A673 (cell line): ENCODE measurements at regions of chr4 and their contacts with region 1.

Region 1: GRCh38 chr4:110637408-110638088 is 14.7 kb upstream of the PITX2 start:
- DNase-seq: peak; percentile 34
- H3K4me3 ChIP-seq: peak overlapping the region; percentile 57
- H3K27ac ChIP-seq: no peak overlapping the region
- H3K4me1 ChIP-seq: no peaks in the 10 kb centered on the region
- H3K27me3 ChIP-seq: peaks cover 14% of the 10 kb centered on the region
- CTCF ChIP-seq: peak; percentile 43; the same call in 1 of the 2 replicates

Region 2: DNA sequence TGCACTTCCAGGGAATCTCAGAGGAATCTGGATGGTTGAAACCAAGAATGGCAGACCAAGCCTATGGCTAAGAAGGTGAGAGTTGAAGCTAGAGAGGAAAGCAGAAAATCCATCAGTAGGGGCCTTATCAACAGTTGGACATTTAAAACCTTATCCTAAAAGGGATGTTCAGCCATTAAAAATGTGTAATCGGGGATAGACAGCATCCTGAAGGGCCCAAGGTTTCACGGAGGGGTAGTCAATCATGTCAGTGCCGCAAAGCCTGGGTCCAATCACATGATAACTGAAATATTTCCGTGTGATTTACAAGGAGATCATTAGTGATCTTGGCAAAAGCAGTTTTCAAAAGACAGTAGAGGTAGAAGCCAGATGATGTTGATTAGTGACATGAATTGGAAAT is 377.2 kb before region 1 on chr4:
- CTCF ChIA-PET with region 1: no interaction called
- POLR2A ChIA-PET with region 1: no interaction called
- intact Hi-C with region 1: no loop called
- DNase-seq: no peak
- H3K4me3 ChIP-seq: no peak overlapping the region
- H3K27ac ChIP-seq: no peak overlapping the region
- H3K4me1 ChIP-seq: no peaks in the 10 kb centered on the region
- H3K27me3 ChIP-seq: no peaks in the 10 kb centered on the region
- CTCF ChIP-seq: no peak

Region 3: GRCh38 chr4:110808351-110808878 is 170.9 kb after region 1 on chr4:
- CTCF ChIA-PET with region 1: no interaction called
- POLR2A ChIA-PET with region 1: no interaction called
- intact Hi-C with region 1: no loop called
- DNase-seq: peak; percentile 41
- H3K4me3 ChIP-seq: no peak overlapping the region
- H3K27ac ChIP-seq: no peak overlapping the region
- H3K4me1 ChIP-seq: no peaks in the 10 kb centered on the region
- H3K27me3 ChIP-seq: no peaks in the 10 kb centered on the region
- CTCF ChIP-seq: no peak

Region 4: DNA sequence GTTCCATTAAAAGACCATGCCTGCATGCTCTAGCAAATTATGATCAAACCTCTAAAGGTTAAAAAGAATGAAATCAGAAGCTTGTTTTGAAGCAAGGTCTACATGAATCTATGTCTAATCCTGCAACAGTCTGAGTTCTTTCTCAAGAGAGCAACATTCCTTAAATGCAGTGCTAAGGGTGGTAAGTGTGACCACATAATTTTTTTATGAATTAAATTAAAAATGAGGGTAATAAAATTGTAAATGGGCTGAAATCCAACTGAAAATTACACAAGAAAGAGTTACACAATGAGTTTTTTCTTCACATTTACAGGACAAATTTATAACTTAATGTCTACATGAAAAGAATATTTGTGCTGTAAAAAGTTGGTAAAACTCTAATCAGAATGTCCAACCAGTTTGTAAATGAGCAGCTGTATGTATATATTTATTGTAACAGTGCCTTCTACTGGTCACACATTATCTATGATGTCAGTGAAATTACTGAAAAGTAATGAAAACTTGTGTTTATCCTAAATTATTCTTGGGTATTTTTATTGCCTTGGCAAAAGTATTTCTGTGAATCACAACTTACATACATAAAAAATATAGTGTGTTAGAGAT is 321.6 kb after region 1 on chr4:
- CTCF ChIA-PET with region 1: no interaction called
- POLR2A ChIA-PET with region 1: no interaction called
- intact Hi-C with region 1: loop called (anchors 2 kb)
- DNase-seq: peak; percentile 40
- H3K4me3 ChIP-seq: no peak overlapping the region
- H3K27ac ChIP-seq: no peak overlapping the region
- H3K4me1 ChIP-seq: no peaks in the 10 kb centered on the region
- H3K27me3 ChIP-seq: no peaks in the 10 kb centered on the region
- CTCF ChIP-seq: peak; percentile 65